ENCODE measurements at regions of chr17 and their contacts with region 1.

Region 1: DNA sequence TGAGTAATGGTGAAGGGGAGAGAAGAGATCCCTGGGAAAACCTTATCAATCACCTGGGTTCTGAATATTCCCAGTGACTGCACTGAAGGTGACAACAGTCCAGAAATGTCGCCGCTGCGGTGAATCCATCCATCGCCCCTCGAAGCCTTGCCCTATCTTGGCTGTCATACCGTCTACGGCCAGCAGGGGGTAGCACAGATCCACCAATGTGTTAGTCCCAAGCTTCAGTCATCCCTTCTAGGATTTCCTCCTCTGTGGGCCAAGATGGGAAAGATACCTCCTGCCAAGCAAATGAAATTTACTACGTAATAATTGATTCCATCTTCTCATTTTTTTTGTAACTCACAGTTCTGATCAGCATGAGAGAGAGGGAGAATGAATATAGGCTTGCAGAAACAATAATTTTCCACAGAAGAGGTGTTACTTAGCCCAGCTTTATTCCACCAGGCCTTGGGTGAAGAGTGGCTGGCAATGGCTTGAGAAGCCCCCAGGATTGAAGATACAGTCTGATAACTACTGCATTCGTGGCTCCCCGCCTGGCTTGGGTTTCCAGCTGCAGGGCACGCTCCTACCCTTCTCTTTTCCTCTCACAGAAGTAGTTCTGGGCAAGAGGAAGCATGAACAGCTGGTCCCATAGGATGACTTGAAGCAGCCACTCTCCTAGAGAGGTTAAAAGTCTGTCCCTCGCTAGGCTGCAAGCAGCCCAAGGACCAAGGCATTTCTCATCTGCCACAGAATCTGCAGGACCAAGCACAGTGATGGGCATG is 2.6 kb upstream of the FMNL1 start:
- DNase-seq: peak; percentile 90
- H3K4me3 ChIP-seq: no peak overlapping the region
- H3K27ac ChIP-seq: no peak overlapping the region
- H3K4me1 ChIP-seq: peaks cover 0 to 13% (median 6%) of the 10 kb centered on the region in 4 donors
- H3K27me3 ChIP-seq: peaks cover 29% of the 10 kb centered on the region
- CTCF ChIP-seq: peak; percentile 93 to 98 (median 95)
- EP300 ChIP-seq: no peak
- POLR2A ChIP-seq: no peak

Region 2: GRCh38 chr17:45031231-45032173 is 187.6 kb before region 1 on chr17:
- in situ Hi-C with region 1: no loop called
- intact Hi-C with region 1: no loop called
- DNase-seq: no peak
- H3K4me3 ChIP-seq: no peak overlapping the region
- H3K27ac ChIP-seq: peak overlapping the region in 1 of 4 donors; percentile 17
- H3K4me1 ChIP-seq: peaks cover 9 to 14% (median 12%) of the 10 kb centered on the region in 4 donors
- H3K27me3 ChIP-seq: no peaks in the 10 kb centered on the region
- CTCF ChIP-seq: no peak
- EP300 ChIP-seq: no peak
- POLR2A ChIP-seq: no peak

Region 3: GRCh38 chr17:45247429-45248131 is 28.5 kb after region 1 on chr17:
- in situ Hi-C with region 1: no loop called
- intact Hi-C with region 1: loop called (anchors 2 kb)
- DNase-seq: peak; percentile 99
- H3K4me3 ChIP-seq: peak overlapping the region; percentile 10 to 65 (median 54)
- H3K27ac ChIP-seq: peak overlapping the region; percentile 83 to 96 (median 90)
- H3K4me1 ChIP-seq: peaks cover 8 to 26% (median 18%) of the 10 kb centered on the region in 4 donors
- H3K27me3 ChIP-seq: no peaks in the 10 kb centered on the region
- CTCF ChIP-seq: peak in 1 of 5 experiments; percentile 10
- EP300 ChIP-seq: no peak
- POLR2A ChIP-seq: peak; percentile 95

Measured in transverse colon (tissue), 4 donors.